Vagina (tissue), 2 donors: ENCODE measurements at regions of chr5 and their contacts with region 1.

Region 1: DNA sequence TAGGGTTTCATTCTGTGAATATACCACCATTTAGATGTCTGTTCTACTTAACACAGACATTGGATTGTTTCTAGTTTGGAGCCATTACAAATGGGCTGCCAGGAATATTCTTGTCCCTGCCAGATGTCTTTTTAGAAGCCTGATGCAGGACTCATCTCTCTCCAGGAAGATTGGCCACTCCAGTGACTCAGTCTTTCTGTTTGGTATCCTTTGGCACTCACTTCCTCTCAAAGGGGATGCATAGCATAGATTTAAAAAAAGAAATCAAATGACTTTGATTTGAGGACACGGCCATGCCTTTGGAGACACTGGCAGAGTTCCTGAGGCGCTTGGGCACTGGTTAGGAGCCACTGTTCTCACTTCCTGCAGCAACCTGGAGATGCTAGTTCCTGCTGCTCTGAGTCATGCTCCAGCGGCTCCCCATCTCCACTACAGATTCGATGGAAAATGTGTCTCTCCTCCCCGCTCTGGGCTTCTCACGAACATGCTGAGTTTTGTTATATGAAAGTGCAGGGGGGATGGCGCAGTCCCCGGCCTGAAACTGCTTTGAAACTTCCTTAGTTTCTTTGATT is 3.5 kb upstream of the ZNF366 start:
- DNase-seq: peak in 1 of 2 donors; percentile 86
- H3K4me3 ChIP-seq: no peak overlapping the region
- H3K27ac ChIP-seq: peak overlapping the region; percentile 0
- H3K4me1 ChIP-seq: peaks cover 16% of the 10 kb centered on the region
- H3K27me3 ChIP-seq: no peaks in the 10 kb centered on the region
- CTCF ChIP-seq: no peak
- POLR2A ChIP-seq: no peak

Region 2: GRCh38 chr5:72378636-72379290 is 131.9 kb before region 1 on chr5:
- intact Hi-C with region 1: loop called (anchors 10 kb)
- DNase-seq: no peak
- H3K4me3 ChIP-seq: no peak overlapping the region
- H3K27ac ChIP-seq: no peak overlapping the region
- H3K4me1 ChIP-seq: peaks cover 11% of the 10 kb centered on the region
- H3K27me3 ChIP-seq: no peaks in the 10 kb centered on the region
- CTCF ChIP-seq: no peak
- POLR2A ChIP-seq: no peak

Region 3: GRCh38 chr5:72451741-72452505 is 58.8 kb before region 1 on chr5:
- intact Hi-C with region 1: loop called (anchors 10 kb)
- DNase-seq: no peak
- H3K4me3 ChIP-seq: peak overlapping the region in 1 of 2 donors; percentile 22
- H3K27ac ChIP-seq: peak overlapping the region; percentile 90
- H3K4me1 ChIP-seq: peaks cover 39% of the 10 kb centered on the region
- H3K27me3 ChIP-seq: no peaks in the 10 kb centered on the region
- CTCF ChIP-seq: no peak
- POLR2A ChIP-seq: no peak